GM10248 (cell line): ENCODE measurements at regions of chr16 and their contacts with region 1.

Region 1: DNA sequence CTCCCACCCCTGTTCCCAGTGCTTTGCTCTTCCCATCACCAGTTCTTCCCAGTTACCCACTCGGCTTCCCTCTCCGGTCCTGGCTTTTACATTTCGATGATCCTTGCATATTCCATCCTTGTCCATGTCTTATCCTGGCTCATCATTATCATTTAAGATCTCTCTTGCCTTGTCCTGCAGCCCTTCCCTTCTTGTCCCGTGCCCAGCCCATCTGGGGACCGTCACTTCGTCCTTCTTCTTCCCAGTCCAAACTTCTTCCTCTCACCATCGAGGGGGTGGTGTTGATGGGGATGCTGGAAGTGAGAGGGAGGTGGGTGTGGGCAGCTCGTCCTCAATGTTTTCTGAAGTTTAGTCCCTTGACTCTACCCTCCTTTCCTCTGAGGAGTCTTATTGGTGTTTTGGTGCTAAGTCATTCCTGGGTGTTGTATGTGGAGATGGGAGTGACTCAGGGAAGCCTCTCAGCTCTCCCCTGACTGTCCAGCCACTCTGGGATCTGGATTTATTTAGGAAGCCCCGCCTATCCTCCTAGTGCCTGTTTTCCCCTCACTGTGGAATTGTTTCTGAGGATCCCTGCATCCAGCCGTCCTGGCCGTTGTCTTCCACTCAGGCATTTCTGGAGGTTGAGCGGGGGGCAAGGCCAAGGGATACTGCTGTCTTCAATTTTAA is 975 bp downstream of the SNX29 start:
- DNase-seq: no peak
- CTCF ChIP-seq: no peak

Region 2: GRCh38 chr16:11916524-11917285 is 60.8 kb before region 1 on chr16:
- CTCF ChIA-PET with region 1: no interaction called
- POLR2A ChIA-PET with region 1: no interaction called
- DNase-seq: no peak
- CTCF ChIP-seq: no peak

Region 3: DNA sequence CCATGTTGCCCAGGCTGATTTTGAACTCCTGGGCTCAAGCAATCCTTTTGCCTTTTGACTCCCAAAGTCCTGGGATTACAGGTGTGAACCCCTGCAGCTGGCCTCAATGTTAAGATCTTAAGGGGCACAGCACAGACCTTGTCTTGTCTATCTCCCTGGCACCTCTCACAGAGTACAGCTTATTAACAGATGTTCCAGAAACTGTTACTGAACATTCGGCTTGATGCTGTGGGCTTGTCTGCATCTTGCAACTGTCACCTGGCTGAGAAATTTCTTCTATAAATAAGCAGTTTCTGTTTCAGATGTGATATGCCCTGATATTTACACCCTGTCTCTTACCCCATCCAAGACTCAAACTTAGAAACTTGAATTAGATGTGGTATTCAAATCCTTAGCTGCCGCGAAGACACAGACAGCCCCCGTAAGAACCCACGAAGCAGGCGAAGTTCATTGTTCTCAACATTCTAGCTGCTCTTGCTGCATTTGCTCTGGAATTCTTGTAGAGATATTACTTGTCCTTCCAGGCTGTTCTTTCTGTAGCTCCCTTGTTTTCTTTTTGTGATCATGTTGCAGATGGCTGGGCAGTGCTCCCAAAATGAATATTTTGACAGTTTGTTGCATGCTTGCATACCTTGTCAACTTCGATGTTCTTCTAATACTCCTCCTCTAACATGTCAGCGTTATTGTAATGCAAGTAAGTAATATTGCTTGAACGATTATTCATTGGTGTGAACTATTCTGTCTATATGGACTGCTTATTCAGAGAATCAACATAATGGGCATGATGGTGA is 12.6 kb before region 1 on chr16 and contains the start of gene TNFRSF17:
- CTCF ChIA-PET with region 1: interaction called, 12 read pairs
- POLR2A ChIA-PET with region 1: interaction called, 6 read pairs
- DNase-seq: peak; percentile 71
- CTCF ChIP-seq: no peak

Region 4: GRCh38 chr16:12021578-12022253 is 44.2 kb after region 1 on chr16:
- CTCF ChIA-PET with region 1: no interaction called
- POLR2A ChIA-PET with region 1: interaction called, 11 read pairs
- DNase-seq: peak; percentile 5
- CTCF ChIP-seq: no peak